Esophagus squamous epithelium (tissue), 5 donors: ENCODE measurements at regions of chr3 and their contacts with region 1.

Region 1: DNA sequence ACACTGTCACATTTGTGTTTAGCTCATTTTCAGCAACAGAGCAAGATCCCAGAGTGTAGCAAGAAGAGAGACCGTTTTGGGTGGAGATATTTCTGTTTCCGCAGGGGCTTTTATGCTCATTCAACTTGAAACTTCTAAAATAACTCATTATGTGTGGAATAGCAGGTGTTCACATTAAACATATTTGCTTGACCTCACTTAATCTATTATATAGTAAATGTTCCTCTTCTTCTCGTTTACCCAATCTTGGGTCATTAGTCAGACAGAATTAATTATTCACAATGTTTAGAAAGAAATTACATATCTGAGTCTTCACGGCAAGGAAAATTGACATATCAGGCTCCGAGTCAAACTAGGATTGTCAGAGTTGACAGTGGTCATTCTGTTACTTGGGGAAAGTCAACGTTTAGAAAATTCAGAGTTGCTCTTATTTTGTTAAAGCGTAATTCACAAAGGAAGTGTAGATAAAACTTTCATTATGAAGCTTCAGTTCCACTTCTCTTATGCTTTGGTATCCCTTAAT is 222.9 kb downstream of the TPRG1 start:
- DNase-seq: no peak
- H3K4me3 ChIP-seq: no peak overlapping the region
- H3K27ac ChIP-seq: peak overlapping the region in 1 of 4 donors; percentile 82
- H3K4me1 ChIP-seq: peaks cover 0 to 39% (median 7%) of the 10 kb centered on the region in 3 donors
- H3K27me3 ChIP-seq: no peaks in the 10 kb centered on the region
- CTCF ChIP-seq: no peak
- POLR2A ChIP-seq: no peak

Region 2: DNA sequence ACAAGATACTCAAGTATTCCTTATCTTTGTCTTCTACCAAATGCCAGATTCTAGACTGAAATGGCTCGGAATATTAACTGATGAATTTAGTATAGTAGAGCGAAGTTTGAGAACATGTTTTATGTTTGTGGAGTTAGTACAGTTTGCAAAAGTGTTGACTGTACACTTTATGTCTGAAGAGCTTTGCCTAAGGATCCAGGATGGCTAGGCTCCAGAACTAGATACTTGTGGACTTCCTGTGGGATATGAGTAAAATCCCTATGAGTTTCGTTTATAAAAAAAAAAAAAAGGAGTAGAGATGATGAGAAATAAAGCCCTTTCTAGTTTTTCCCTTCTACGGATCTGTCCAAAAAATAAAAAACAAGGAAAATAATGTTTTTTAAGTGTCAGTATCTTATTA is 333.2 kb after region 1 on chr3:
- intact Hi-C with region 1: no loop called
- DNase-seq: no peak
- H3K4me3 ChIP-seq: no peak overlapping the region
- H3K27ac ChIP-seq: no peak overlapping the region
- H3K4me1 ChIP-seq: no peaks in the 10 kb centered on the region
- H3K27me3 ChIP-seq: no peaks in the 10 kb centered on the region
- CTCF ChIP-seq: no peak
- POLR2A ChIP-seq: no peak

Region 3: GRCh38 chr3:189839576-189839975 is 444.9 kb after region 1 on chr3:
- intact Hi-C with region 1: loop called (anchors 10 kb)
- DNase-seq: no peak
- H3K4me3 ChIP-seq: peak overlapping the region in 1 of 4 donors; percentile 0
- H3K27ac ChIP-seq: peak overlapping the region; percentile 48 to 89 (median 82)
- H3K4me1 ChIP-seq: peaks cover 12 to 93% (median 41%) of the 10 kb centered on the region in 3 donors
- H3K27me3 ChIP-seq: no peaks in the 10 kb centered on the region
- CTCF ChIP-seq: no peak
- POLR2A ChIP-seq: no peak